ENCODE measurements at regions of chr2 and their contacts with region 1.

Region 1: DNA sequence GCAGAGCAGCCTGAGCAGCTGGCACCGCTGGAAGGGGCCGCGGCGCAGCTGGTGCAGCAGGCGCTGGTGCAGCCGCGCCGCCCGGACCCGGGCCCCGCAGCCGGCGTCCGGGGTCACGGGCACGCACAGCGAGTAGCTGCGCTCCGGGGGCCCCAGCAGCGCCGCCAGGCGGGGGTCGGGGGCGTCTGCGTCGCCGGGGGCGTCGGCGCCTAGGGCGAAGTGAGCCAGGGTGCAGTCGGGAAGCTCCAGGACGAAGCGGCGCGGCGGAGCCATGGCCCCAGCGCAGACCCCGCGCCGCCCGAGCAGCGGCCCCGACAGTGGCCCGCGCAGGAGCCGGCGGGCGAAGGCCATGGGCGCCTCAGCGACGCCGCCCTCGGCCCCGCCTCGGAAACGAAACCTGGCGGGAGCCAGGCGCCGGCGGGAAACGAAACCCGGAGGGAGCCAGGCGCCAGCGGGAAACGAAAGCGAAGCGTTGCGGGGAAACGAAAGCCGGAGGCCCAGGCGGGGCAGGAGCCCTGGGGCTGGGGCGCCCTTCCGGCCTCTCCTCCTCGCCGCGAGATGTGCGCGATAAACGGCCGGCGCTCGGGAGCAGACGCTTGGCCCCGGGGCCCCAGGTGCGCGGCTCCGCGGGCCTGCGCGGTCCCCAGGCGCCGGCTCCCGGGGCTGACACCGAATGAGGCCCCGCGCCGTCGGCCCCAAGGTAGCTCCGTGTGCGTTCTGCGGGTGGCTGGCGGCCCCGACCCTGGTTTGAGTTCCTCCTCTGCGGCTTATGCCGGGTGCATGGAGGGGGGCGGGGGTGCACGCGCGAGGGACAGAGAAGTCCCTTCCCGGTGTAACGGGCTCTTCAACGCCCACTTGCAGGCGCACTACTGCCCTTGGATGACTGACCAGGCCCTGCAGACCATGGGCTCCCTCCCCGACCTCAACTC is at the start of gene CMPK2:
- DNase-seq: peak; percentile 63 to 84 (median 79)
- ATAC-seq: peak; percentile 81
- H3K4me3 ChIP-seq: peak within 1 kb of the TSS; percentile 69
- H3K4me3 Mint-ChIP-seq: peak within 1 kb of the TSS; percentile 93 to 100 (median 96)
- H3K27ac ChIP-seq: peak within 1 kb of the TSS; percentile 68
- H3K27ac Mint-ChIP-seq: peak within 1 kb of the TSS; percentile 85 to 100 (median 91)
- H3K4me1 ChIP-seq: peaks cover 6% of the 10 kb centered on the region in 2 donors
- H3K4me1 Mint-ChIP-seq: peaks cover 18 to 62% (median 29%) of the 10 kb centered on the region in 7 donors
- H3K27me3 ChIP-seq: no peaks in the 10 kb centered on the region
- H3K27me3 Mint-ChIP-seq: peaks cover 0 to 2% (median 0%) of the 10 kb centered on the region in 5 donors
- total RNA-seq, gene CMPK2: 4.0 to 63.0 (median 6.6) TPM

Region 2: DNA sequence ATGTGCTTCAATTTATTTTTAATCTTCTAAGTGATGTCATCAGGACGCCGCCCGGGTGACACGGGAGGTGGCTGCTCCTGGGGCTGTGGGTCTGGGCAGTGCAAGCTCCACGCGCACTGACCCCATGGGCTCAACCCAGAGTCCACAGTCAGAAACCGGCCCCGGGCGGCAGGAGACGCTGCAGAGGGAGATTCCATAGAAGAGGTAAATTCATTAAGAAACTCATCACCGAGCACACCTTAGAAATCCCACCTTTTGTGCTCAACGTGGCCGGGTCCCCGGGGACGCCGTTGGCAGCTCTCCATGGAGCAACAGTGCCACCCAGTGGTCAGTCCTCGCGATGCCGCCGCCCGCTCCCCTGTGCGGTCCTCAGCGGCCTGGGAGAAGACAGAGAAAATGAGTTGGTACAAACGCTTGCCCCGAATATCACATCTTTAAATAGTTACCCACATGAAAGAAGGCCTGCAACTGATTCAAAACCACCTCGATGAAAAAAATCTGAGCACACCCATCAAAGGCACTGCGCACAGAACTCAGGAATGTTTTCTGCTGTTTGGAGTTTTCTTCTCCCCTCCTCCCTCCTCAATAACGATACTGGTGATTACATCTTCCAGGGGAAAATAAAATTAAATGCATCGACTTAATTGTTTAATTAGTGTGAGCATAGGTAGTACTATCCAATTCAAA is 92.5 kb before region 1 on chr2:
- CTCF ChIA-PET with region 1: no interaction called
- POLR2A ChIA-PET with region 1: no interaction called
- intact Hi-C with region 1: loop called in 1 of 2 experiments (anchors 10 kb)
- DNase-seq: peak; percentile 31 to 82 (median 60)
- ATAC-seq: peak; percentile 83
- H3K4me3 ChIP-seq: no peak overlapping the region
- H3K4me3 Mint-ChIP-seq: peak overlapping the region in 4 of 10 donors; percentile 30 to 52 (median 42)
- H3K27ac ChIP-seq: no peak overlapping the region
- H3K27ac Mint-ChIP-seq: no peak overlapping the region
- H3K4me1 ChIP-seq: peaks cover 0 to 6% of the 10 kb centered on the region in 2 donors
- H3K4me1 Mint-ChIP-seq: peaks cover 0 to 15% (median 5%) of the 10 kb centered on the region in 7 donors
- H3K27me3 ChIP-seq: no peaks in the 10 kb centered on the region
- H3K27me3 Mint-ChIP-seq: peaks cover 17 to 33% (median 25%) of the 10 kb centered on the region in 5 donors

Region 3: DNA sequence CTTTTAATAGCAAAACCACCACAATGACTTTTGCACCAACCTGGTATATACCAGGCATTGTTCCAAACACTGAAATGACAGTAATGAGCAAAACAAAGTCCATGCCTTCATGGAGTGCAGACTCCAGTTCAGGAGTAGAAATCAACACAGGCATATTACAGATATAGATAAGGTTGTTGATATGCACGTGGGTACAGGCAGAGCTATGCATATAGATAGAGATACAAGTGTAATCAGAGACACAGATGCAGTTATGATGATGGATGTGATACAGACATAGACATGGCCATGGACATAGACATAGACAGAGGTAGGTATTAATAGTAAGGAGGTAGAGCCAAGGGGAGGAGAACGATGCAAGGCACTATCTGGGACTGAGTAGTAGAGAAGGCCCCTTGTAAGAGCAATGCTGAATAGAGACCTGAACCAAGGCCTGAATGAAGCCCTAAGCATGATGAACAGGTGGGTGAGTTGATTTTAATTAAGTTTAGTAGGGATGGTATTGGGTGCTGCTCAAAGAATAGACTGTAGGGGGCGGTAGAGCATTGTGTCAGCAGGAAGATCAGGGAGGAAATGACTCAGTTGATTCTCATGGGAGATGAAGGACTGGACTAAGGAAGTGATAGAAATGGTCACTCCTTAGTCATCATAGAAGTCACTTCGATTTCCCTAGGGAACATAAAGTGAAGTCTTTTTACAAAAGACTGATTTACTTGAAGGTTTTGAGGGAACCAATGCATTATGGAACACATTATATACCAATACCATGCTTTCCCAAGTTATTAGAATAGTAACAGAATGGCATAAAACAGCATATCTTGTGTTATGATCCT is 39.3 kb before region 1 on chr2:
- CTCF ChIA-PET with region 1: interaction called, 4 read pairs
- POLR2A ChIA-PET with region 1: no interaction called
- intact Hi-C with region 1: loop called (anchors 1 kb)
- DNase-seq: peak in 8 of 9 donors; percentile 26 to 58 (median 51)
- ATAC-seq: peak; percentile 92
- H3K4me3 ChIP-seq: no peak overlapping the region
- H3K4me3 Mint-ChIP-seq: no peak overlapping the region
- H3K27ac ChIP-seq: no peak overlapping the region
- H3K27ac Mint-ChIP-seq: no peak overlapping the region
- H3K4me1 ChIP-seq: no peaks in the 10 kb centered on the region
- H3K4me1 Mint-ChIP-seq: peaks cover 0 to 14% (median 11%) of the 10 kb centered on the region in 7 donors
- H3K27me3 ChIP-seq: no peaks in the 10 kb centered on the region
- H3K27me3 Mint-ChIP-seq: no peaks in the 10 kb centered on the region

Region 4: GRCh38 chr2:6832596-6833299 is 32.9 kb before region 1 on chr2:
- CTCF ChIA-PET with region 1: interaction called, 3 read pairs
- POLR2A ChIA-PET with region 1: no interaction called
- intact Hi-C with region 1: loop called in 1 of 2 experiments (anchors 1 kb)
- DNase-seq: no peak
- ATAC-seq: no peak
- H3K4me3 ChIP-seq: no peak overlapping the region
- H3K4me3 Mint-ChIP-seq: peak overlapping the region in 1 of 10 donors; percentile 72
- H3K27ac ChIP-seq: no peak overlapping the region
- H3K27ac Mint-ChIP-seq: peak overlapping the region in 6 of 9 donors; percentile 0 to 92 (median 36)
- H3K4me1 ChIP-seq: no peaks in the 10 kb centered on the region
- H3K4me1 Mint-ChIP-seq: peaks cover 0 to 31% (median 7%) of the 10 kb centered on the region in 7 donors
- H3K27me3 ChIP-seq: no peaks in the 10 kb centered on the region
- H3K27me3 Mint-ChIP-seq: no peaks in the 10 kb centered on the region

Region 5: GRCh38 chr2:6845312-6845711 is 20.3 kb before region 1 on chr2:
- CTCF ChIA-PET with region 1: interaction called, 8 read pairs
- POLR2A ChIA-PET with region 1: interaction called, 3 read pairs
- intact Hi-C with region 1: loop called in 1 of 2 experiments (anchors 1 kb)
- DNase-seq: peak in 2 of 9 donors; percentile 6 to 23
- ATAC-seq: no peak
- H3K4me3 ChIP-seq: no peak overlapping the region
- H3K4me3 Mint-ChIP-seq: no peak overlapping the region
- H3K27ac ChIP-seq: no peak overlapping the region
- H3K27ac Mint-ChIP-seq: no peak overlapping the region
- H3K4me1 ChIP-seq: no peaks in the 10 kb centered on the region
- H3K4me1 Mint-ChIP-seq: peaks cover 0 to 20% (median 0%) of the 10 kb centered on the region in 7 donors
- H3K27me3 ChIP-seq: no peaks in the 10 kb centered on the region
- H3K27me3 Mint-ChIP-seq: no peaks in the 10 kb centered on the region

Region 6: GRCh38 chr2:6877402-6878304 is 12.0 kb after region 1 on chr2 and contains the start of gene RSAD2:
- CTCF ChIA-PET with region 1: interaction called, 38 read pairs
- POLR2A ChIA-PET with region 1: interaction called, 94 read pairs
- intact Hi-C with region 1: loop called (anchors 1 kb)
- DNase-seq: peak in 8 of 9 donors; percentile 29 to 73 (median 64)
- ATAC-seq: peak; percentile 85
- H3K4me3 ChIP-seq: peak within 1 kb of the TSS; percentile 58
- H3K4me3 Mint-ChIP-seq: peak within 1 kb of the TSS; percentile 80 to 97 (median 90)
- H3K27ac ChIP-seq: peak within 1 kb of the TSS; percentile 59
- H3K27ac Mint-ChIP-seq: peak within 1 kb of the TSS; percentile 80 to 98 (median 91)
- H3K4me1 ChIP-seq: peaks cover 20 to 50% of the 10 kb centered on the region in 2 donors
- H3K4me1 Mint-ChIP-seq: peaks cover 36 to 94% (median 78%) of the 10 kb centered on the region in 7 donors
- H3K27me3 ChIP-seq: no peaks in the 10 kb centered on the region
- H3K27me3 Mint-ChIP-seq: no peaks in the 10 kb centered on the region
- total RNA-seq, gene RSAD2: 5.0 to 72.6 (median 5.6) TPM

Region 7: DNA sequence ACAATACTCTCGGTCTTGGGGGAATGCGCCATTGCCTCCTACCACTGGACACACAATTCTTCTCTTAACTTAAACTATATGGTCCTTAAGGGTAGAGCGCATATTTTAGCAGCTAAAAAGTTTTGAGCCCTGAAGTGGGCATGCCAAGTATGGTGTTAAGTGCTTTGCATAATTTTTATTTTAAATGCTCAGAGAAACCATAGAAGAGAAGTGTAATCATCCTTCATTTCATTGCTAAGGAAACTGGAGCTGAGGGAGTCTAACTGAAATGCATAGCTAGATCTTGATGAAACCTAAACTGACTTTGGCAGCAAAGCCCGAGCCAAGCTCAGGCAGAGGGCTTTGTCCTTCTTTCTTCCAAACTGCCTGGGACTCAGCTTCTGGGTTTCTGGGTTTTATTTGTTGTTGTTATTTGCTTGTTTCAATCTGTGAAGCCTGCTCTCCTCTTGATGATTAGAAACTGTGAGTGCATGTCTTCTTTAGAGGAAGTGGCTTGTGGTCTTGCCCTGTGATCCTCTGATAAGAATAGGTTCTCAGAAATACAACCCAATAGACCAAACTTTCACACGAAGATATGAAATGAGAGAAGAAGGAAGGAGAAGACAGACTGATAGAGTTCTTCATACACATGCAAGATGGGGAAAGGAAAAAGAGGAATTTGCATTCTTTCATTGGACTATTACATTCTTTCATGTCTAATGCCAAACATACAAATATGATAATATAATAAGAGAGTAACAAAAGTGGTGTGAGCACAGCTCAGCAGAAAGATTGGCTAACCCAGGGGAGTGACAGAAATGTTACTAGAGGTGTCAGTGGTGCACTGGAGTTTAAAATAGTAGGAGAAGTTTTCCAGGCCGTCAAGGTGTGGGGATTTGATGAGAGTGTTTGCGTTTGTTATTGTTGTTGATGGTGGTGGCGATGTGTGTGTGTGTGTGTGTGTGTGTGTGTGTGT is 44.1 kb after region 1 on chr2:
- CTCF ChIA-PET with region 1: interaction called, 3 read pairs
- POLR2A ChIA-PET with region 1: interaction called, 19 read pairs
- intact Hi-C with region 1: loop called (anchors 2 kb)
- DNase-seq: peak in 7 of 9 donors; percentile 70 to 84 (median 80)
- ATAC-seq: peak; percentile 84
- H3K4me3 ChIP-seq: peak overlapping the region; percentile 17
- H3K4me3 Mint-ChIP-seq: peak overlapping the region; percentile 68 to 85 (median 80)
- H3K27ac ChIP-seq: peak overlapping the region; percentile 85
- H3K27ac Mint-ChIP-seq: peak overlapping the region; percentile 85 to 99 (median 92)
- H3K4me1 ChIP-seq: peaks cover 58 to 94% of the 10 kb centered on the region in 2 donors
- H3K4me1 Mint-ChIP-seq: peaks cover 61 to 97% (median 93%) of the 10 kb centered on the region in 7 donors
- H3K27me3 ChIP-seq: no peaks in the 10 kb centered on the region
- H3K27me3 Mint-ChIP-seq: peaks cover 0 to 12% (median 0%) of the 10 kb centered on the region in 5 donors

Region 8: GRCh38 chr2:7026742-7027141 is 161.1 kb after region 1 on chr2:
- CTCF ChIA-PET with region 1: no interaction called
- POLR2A ChIA-PET with region 1: no interaction called
- intact Hi-C with region 1: no loop called
- DNase-seq: no peak
- ATAC-seq: no peak
- H3K4me3 ChIP-seq: no peak overlapping the region
- H3K4me3 Mint-ChIP-seq: no peak overlapping the region
- H3K27ac ChIP-seq: no peak overlapping the region
- H3K27ac Mint-ChIP-seq: peak overlapping the region in 5 of 9 donors; percentile 10 to 69 (median 36)
- H3K4me1 ChIP-seq: peaks cover 0 to 7% of the 10 kb centered on the region in 2 donors
- H3K4me1 Mint-ChIP-seq: peaks cover 10 to 21% (median 17%) of the 10 kb centered on the region in 7 donors
- H3K27me3 ChIP-seq: no peaks in the 10 kb centered on the region
- H3K27me3 Mint-ChIP-seq: no peaks in the 10 kb centered on the region

Region 9: DNA sequence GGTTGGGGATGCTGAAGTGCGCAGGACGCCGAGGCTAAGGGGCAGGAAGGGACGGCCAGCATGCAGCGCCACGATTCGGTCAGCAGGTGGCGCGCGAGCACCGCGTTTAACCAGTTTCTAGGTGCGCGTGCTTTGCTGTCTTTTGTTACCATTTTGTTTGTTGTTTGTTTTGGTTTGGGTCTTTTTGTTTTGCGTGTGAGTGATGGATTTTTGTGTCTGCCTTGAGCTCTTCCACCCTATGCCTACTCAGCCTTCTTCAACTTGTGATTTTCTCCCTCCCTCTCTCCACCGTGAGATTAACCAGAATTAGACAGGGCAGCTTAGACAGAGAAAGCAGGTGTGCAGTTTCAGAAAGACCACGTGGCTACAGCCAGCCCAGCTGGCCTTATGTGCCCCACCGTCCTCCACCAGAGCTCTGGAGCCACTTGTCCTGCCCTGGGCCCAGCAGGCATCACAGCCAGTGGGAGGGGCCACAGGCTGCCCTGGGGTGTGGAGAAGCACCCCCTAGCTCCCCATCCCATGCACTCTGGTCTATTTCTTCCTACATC is 231.8 kb after region 1 on chr2:
- CTCF ChIA-PET with region 1: no interaction called
- POLR2A ChIA-PET with region 1: no interaction called
- intact Hi-C with region 1: no loop called
- DNase-seq: peak; percentile 47 to 77 (median 72)
- ATAC-seq: peak; percentile 92
- H3K4me3 ChIP-seq: peak overlapping the region; percentile 56
- H3K4me3 Mint-ChIP-seq: peak overlapping the region; percentile 56 to 82 (median 76)
- H3K27ac ChIP-seq: no peak overlapping the region
- H3K27ac Mint-ChIP-seq: peak overlapping the region in 5 of 9 donors; percentile 22 to 86 (median 45)
- H3K4me1 ChIP-seq: peaks cover 0 to 7% of the 10 kb centered on the region in 2 donors
- H3K4me1 Mint-ChIP-seq: peaks cover 6 to 8% (median 8%) of the 10 kb centered on the region in 7 donors
- H3K27me3 ChIP-seq: no peaks in the 10 kb centered on the region
- H3K27me3 Mint-ChIP-seq: no peaks in the 10 kb centered on the region